GM10248 (cell line): ENCODE measurements at regions of chr4 and their contacts with region 1.

Region 1: GRCh38 chr4:159487284-159487747 is 384.4 kb downstream of the RAPGEF2 start:
- DNase-seq: peak; percentile 54
- CTCF ChIP-seq: peak; percentile 67

Region 2: DNA sequence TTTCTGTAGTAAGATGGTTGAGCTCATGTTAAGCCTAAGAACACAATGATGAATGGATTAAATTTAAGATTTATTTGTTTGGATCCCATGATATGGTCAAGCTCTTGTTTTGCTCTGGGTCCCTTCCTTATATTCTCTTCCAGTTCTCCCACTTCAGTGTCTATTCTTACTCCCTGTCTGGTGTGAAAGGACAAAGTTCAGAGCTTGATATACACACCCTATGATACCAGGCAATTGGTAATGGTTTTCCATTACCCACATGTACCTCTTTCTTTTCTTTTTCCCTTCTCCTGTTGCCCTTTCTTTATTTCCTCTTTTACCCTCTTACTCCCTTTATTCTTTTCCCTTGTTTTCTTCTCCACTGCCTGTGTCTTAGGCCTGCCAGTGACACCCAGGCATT is 160.8 kb before region 1 on chr4:
- CTCF ChIA-PET with region 1: no interaction called
- POLR2A ChIA-PET with region 1: no interaction called
- DNase-seq: no peak
- CTCF ChIP-seq: no peak

Region 3: GRCh38 chr4:159476886-159477285 is 10.4 kb before region 1 on chr4:
- CTCF ChIA-PET with region 1: interaction called, 13 read pairs
- POLR2A ChIA-PET with region 1: no interaction called
- DNase-seq: no peak
- CTCF ChIP-seq: no peak